ENCODE measurements at regions of chr19 and their contacts with region 1.

Region 1: DNA sequence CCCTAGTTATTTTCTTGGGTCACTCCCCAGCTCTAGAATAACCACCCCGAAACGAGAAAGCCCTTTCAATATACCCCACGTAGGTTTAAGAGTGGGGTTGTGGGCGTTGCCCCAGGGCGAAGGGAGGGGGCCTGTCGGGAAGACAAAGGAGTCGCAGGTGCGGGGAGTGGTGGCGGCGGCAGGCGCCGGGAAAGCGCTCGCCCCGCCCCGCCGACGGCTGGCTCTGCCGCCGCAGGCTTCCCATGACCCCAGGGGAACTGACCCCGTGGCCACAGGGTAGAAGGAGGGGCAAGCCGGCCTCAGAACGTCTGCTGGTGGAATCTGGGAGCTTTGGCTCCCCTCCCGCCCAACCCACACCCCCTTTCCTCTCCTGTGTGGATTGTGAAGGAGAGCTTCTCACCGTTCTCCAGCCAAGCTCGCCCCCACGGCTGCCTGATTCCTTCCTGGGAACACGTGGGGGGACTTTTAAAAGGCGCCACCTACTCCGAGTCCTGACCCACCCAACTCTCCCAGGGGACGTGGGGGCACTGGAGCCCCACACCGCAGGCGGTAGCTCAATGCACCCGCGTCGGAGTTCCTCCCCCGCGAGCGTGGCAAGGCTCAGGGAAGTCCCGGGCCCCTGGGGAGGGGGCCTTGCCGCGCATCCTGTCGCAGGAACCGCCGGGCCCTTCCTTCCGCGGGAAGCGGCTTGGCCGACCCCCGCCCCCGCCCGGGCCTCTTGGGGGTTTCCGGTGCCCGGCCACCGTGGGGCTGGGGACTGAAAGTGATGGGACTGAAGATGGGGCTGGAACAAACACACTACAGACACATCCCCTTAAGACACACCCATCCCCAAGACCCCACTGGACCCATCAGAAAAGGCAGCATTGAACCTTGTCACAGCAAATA is 5.5 kb downstream of the IER2 start:
- H3K4me3 ChIP-seq: peak overlapping the region; percentile 99
- H3K27ac ChIP-seq: peak overlapping the region; percentile 59; the same call in 1 of the 2 replicates
- H3K4me1 ChIP-seq: peaks cover 8% of the 10 kb centered on the region
- CTCF ChIP-seq: no peak

Region 2: GRCh38 chr19:13117772-13118423 is 37.8 kb before region 1 on chr19 and contains the start of gene NACC1:
- CTCF ChIA-PET with region 1: interaction called, 3 read pairs
- POLR2A ChIA-PET with region 1: interaction called, 48 read pairs
- H3K4me3 ChIP-seq: peak within 1 kb of the TSS; percentile 93
- H3K27ac ChIP-seq: peak within 1 kb of the TSS; percentile 98
- H3K4me1 ChIP-seq: peaks cover 7% of the 10 kb centered on the region
- CTCF ChIP-seq: no peak; the same call in 1 of the 2 replicates